A549 (cell line): ENCODE measurements at regions of chr14 and their contacts with region 1.

Region 1: DNA sequence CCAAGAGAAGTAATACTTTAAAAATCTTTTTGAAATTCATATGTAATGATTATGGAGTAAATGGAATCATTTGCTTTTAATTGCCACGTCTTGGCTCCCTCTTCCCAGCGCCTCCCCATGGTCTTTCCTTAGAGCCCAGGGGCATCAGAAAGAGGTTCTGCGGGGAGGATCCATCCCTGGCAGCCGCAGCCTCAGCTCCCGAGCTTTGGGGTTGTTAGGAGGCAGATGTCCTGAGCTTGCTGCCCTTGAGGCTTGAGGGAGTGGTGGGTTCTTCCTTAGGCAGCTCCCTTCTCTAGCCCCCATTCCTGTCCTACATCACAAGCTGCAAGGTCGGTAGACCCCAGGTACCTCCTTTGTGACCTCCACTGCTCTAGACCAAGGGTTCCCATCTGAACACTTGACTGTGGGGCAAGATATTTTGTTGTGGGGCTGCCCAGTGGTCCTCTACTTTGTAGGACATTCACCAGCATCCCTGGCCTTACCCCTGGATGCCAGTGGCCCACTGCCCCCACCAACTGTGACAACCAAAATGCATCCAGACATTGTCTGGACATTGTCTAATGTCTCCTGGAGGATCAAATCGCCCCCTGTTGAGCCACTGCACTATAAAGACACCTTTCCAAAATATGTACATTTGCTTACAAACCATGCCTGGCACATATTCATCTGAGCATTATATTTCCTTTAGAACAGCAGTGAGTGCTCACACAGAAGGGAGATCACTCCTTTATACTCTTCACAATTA is 6.3 kb downstream of the PPP2R5C start:
- DNase-seq: no peak
- ATAC-seq: no peak
- H3K4me3 ChIP-seq: no peak overlapping the region
- H3K27ac ChIP-seq: no peak overlapping the region
- H3K4me1 ChIP-seq: no peaks in the 10 kb centered on the region; the same call in 2 of the 3 replicates
- CTCF ChIP-seq: no peak
- EP300 ChIP-seq: no peak
- POLR2A ChIP-seq: no peak
- RAD21 ChIP-seq: no peak

Region 2: DNA sequence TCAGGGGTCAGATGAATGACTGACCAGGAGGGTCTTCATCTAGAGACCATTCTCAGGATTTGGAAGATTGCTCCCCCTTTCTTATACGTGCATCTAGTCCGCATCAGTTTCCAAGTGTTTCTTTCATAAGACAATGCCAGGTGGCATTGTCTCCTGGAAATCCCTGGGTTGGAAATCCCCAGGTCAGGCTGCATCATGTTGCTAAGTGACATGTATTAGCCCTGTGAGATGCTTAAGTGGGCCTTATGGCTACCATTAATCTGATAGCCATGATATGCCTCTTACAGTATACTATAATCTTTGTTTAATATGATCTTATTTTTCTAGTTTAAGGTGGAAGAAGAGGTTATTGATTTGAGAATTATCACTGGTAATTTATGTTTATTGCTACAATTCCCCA is 113.7 kb before region 1 on chr14:
- CTCF ChIA-PET with region 1: no interaction called
- POLR2A ChIA-PET with region 1: no interaction called
- DNase-seq: no peak
- ATAC-seq: no peak
- H3K4me3 ChIP-seq: no peak overlapping the region
- H3K27ac ChIP-seq: no peak overlapping the region
- H3K4me1 ChIP-seq: no peaks in the 10 kb centered on the region
- CTCF ChIP-seq: no peak
- EP300 ChIP-seq: no peak
- POLR2A ChIP-seq: no peak
- RAD21 ChIP-seq: no peak

Region 3: GRCh38 chr14:101781240-101782061 is 13.7 kb after region 1 on chr14:
- CTCF ChIA-PET with region 1: interaction called, 22 read pairs
- POLR2A ChIA-PET with region 1: no interaction called
- DNase-seq: no peak
- ATAC-seq: peak; percentile 14 to 59; a peak in 3 of 6 replicates
- H3K4me3 ChIP-seq: peak overlapping the region; percentile 35
- H3K27ac ChIP-seq: peak overlapping the region; percentile 24 to 65; a peak in 3 of 6 replicates
- H3K4me1 ChIP-seq: no peaks in the 10 kb centered on the region
- CTCF ChIP-seq: no peak
- EP300 ChIP-seq: no peak
- POLR2A ChIP-seq: no peak
- RAD21 ChIP-seq: no peak

Region 4: GRCh38 chr14:101809671-101810514 is 42.1 kb after region 1 on chr14:
- CTCF ChIA-PET with region 1: interaction called, 25 read pairs
- POLR2A ChIA-PET with region 1: interaction called, 20 read pairs
- DNase-seq: peak; percentile 78 to 96
- ATAC-seq: peak; percentile 95 to 96
- H3K4me3 ChIP-seq: peak overlapping the region; percentile 59
- H3K27ac ChIP-seq: peak overlapping the region; percentile 83 to 92
- H3K4me1 ChIP-seq: peaks cover 51% of the 10 kb centered on the region
- CTCF ChIP-seq: no peak
- EP300 ChIP-seq: no peak
- POLR2A ChIP-seq: peak; percentile 45
- RAD21 ChIP-seq: no peak

Region 5: GRCh38 chr14:101867854-101868253 is 100.1 kb after region 1 on chr14:
- CTCF ChIA-PET with region 1: interaction called, 15 read pairs
- POLR2A ChIA-PET with region 1: no interaction called
- DNase-seq: no peak
- ATAC-seq: no peak
- H3K4me3 ChIP-seq: no peak overlapping the region
- H3K27ac ChIP-seq: no peak overlapping the region
- H3K4me1 ChIP-seq: no peaks in the 10 kb centered on the region
- CTCF ChIP-seq: no peak
- EP300 ChIP-seq: no peak
- POLR2A ChIP-seq: no peak
- RAD21 ChIP-seq: no peak

Region 6: GRCh38 chr14:101932673-101933072 is 164.9 kb after region 1 on chr14:
- CTCF ChIA-PET with region 1: interaction called, 18 read pairs
- POLR2A ChIA-PET with region 1: no interaction called
- DNase-seq: no peak
- ATAC-seq: no peak; a peak in 1 of 6 replicates
- H3K4me3 ChIP-seq: no peak overlapping the region
- H3K27ac ChIP-seq: no peak overlapping the region
- H3K4me1 ChIP-seq: no peaks in the 10 kb centered on the region
- CTCF ChIP-seq: no peak
- EP300 ChIP-seq: no peak
- POLR2A ChIP-seq: no peak
- RAD21 ChIP-seq: no peak

Region 7: DNA sequence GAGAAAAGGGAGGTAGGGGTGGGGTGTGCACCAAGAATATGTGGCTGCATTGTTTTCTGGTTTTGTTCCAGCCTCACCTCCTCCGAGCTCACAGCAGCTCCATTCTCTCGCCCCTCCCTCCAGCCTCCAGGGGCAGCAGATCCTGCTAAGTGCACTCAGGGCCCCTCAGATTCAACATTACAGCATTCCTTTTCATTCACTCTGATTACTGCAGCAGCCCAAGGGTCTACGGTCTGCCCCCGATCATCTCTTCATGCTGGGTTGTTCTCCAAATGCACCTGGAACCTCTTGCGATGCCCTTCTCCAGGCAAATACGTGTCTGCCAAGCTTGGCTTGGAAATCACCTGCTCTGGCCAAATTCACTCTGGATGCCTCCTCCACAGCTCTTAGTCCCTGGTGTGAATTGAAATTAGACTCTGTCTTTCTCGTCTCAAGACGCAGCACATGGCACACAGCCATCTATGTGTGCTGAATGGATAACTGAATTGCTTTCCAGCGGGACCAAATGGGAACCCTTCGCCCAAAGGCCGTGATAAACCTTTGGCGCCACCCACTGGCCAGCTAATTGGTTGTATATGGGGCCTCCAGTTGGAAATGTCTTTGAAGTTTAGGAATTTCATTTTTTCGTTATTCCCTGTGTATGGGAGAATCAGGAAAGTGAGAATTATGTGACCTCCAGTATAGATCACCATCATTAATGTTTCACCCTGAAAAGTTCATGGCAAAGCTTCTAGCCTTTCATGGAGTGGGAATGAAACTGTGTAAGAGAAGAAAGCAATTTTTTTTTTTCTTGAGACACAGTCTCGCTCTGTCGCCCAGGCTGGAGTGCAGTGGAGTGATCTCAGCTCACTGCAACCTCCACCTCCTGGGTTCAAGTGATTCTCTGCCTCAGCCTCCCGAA is 328.7 kb after region 1 on chr14:
- CTCF ChIA-PET with region 1: interaction called, 31 read pairs
- POLR2A ChIA-PET with region 1: no interaction called
- DNase-seq: peak; percentile 70 to 76
- ATAC-seq: peak; percentile 82 to 92
- H3K4me3 ChIP-seq: no peak overlapping the region
- H3K27ac ChIP-seq: 0 out of 6 replicates have a peak overlapping the region, but pooled peaks of 1 of the 2 experiments have one; percentile 8
- H3K4me1 ChIP-seq: peaks cover 18% of the 10 kb centered on the region
- CTCF ChIP-seq: peak; percentile 87
- EP300 ChIP-seq: no peak
- POLR2A ChIP-seq: no peak
- RAD21 ChIP-seq: peak; percentile 89 to 91